Heart left ventricle (tissue), 16 donors: ENCODE measurements at regions of chr4 and their contacts with region 1.

Region 1: GRCh38 chr4:100421361-100421978 is 96.4 kb downstream of the EMCN start:
- DNase-seq: no peak
- ATAC-seq: peak in 1 of 4 donors; percentile 70
- H3K4me3 ChIP-seq: peak overlapping the region in 3 of 12 donors; percentile 27 to 36 (median 30)
- H3K27ac ChIP-seq: peak overlapping the region in 5 of 12 donors; percentile 12 to 37 (median 17)
- H3K4me1 ChIP-seq: peaks cover 0 to 29% (median 5%) of the 10 kb centered on the region in 12 donors
- H3K27me3 ChIP-seq: no peaks in the 10 kb centered on the region
- CTCF ChIP-seq: peak; percentile 27 to 70 (median 49)
- POLR2A ChIP-seq: no peak

Region 2: DNA sequence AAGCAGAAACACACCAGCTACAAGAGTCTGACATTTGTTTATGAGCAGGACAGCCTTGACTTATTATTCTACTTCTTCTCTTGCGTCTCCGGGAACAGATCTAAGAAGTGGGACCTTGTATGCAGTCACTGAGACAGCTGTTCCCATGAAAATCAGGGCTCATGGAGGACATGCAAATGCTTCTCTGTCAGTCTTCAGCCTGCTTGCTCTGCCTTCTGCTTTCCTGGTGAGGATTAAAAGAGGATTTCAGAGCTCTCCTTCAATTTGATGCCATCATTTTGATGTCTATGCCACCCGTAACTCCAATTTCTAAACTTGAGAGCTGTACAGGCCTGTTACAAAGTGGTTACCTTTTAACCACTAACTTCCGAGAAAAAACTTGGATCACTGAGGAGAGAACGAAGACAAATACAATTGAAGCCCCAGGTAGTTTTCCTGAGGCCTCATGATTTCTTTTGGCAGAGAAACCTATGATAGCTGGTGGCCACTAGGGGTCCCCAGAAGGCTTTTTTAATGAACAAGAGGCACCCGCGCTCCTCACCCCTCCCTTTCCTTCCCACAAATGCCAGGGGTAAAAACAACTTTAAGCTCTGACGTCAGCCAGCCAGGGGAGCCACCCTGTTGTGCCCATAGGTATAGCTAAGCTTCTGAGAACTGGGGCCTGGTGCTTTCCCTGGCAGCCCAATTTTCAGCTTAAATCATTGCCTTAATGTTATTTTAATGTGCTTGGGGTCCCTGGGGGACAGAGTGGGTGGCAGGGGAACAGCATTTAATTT is 328.2 kb before region 1 on chr4:
- intact Hi-C with region 1: loop called in 3 of 10 experiments (anchors 10 kb)
- DNase-seq: peak; percentile 63 to 87 (median 80)
- ATAC-seq: peak; percentile 75 to 96 (median 94)
- H3K4me3 ChIP-seq: no peak overlapping the region
- H3K27ac ChIP-seq: peak overlapping the region in 7 of 12 donors; percentile 1 to 53 (median 23)
- H3K4me1 ChIP-seq: peaks cover 0 to 28% (median 11%) of the 10 kb centered on the region in 12 donors
- H3K27me3 ChIP-seq: no peaks in the 10 kb centered on the region
- CTCF ChIP-seq: peak; percentile 70 to 93 (median 83)
- POLR2A ChIP-seq: no peak

Region 3: GRCh38 chr4:100657187-100657586 is 235.7 kb after region 1 on chr4:
- intact Hi-C with region 1: loop called in 1 of 10 experiments (anchors 10 kb)
- DNase-seq: no peak
- ATAC-seq: peak; percentile 32 to 76 (median 50)
- H3K4me3 ChIP-seq: no peak overlapping the region
- H3K27ac ChIP-seq: peak overlapping the region in 1 of 12 donors; percentile 13
- H3K4me1 ChIP-seq: peaks cover 0 to 5% (median 0%) of the 10 kb centered on the region in 12 donors
- H3K27me3 ChIP-seq: no peaks in the 10 kb centered on the region
- CTCF ChIP-seq: no peak
- POLR2A ChIP-seq: no peak